ENCODE measurements at regions of chr12 and their contacts with region 1.

Region 1: DNA sequence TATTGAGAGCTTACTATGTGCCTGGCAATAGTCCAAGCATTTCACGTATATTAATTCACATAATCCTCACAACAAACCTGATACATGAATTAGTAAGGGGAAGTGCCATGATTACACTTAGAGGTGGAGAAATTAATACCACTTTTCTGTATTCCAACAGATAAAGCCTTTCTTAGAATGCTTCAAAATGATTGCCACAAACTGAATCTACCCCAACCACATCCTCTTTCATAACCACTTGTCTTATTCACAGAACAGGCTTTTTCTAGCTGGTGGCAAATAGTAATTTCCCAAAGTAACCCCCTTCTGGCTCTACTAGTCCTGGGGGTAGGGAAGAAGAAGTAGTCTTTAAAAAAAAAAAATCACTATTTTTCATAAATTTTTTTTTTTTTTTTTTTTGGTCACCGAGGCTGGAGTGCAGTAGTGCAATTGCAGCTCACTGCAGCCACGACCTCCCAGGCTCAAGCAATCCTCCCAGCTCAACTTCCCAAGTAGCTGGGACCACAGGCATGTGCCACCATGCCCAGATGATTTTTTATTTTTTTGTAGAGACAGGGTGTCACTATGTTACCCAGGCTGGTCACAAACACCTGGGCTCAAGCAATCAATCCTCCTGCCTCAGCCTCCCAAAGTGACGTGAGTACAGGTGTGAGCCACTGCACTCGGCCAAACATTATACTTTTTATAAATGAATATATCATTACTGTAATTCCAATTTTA is 59.0 kb upstream of the ARID2 start:
- DNase-seq: peak; percentile 9
- H3K4me3 Mint-ChIP-seq: no peak overlapping the region
- H3K27ac Mint-ChIP-seq: no peak overlapping the region
- H3K4me1 Mint-ChIP-seq: peaks cover 31% of the 10 kb centered on the region
- H3K27me3 Mint-ChIP-seq: no peaks in the 10 kb centered on the region

Region 2: DNA sequence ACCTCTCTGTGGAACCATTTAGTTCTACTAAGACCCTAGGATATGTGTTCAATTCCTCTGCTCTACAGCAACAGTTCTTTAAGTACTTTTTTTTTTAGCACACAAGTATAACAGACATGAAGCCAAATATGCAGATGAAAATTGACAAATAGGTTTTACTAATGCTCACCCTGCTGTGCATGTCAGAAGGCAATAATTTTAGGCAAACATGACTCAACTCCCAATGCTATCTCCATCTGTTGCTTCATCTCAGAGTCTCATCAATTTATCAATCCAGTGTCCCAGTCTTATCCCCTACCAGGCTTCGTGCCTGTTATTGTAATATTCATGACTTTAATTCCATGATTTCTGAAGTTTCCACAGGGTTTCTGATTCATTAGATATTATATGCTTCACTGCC is 677.3 kb before region 1 on chr12:
- intact Hi-C with region 1: no loop called
- DNase-seq: no peak
- H3K4me3 Mint-ChIP-seq: no peak overlapping the region
- H3K27ac Mint-ChIP-seq: no peak overlapping the region
- H3K4me1 Mint-ChIP-seq: no peaks in the 10 kb centered on the region
- H3K27me3 Mint-ChIP-seq: peaks cover 2% of the 10 kb centered on the region

Region 3: GRCh38 chr12:45464699-45465098 is 205.8 kb before region 1 on chr12:
- intact Hi-C with region 1: no loop called
- DNase-seq: no peak
- H3K4me3 Mint-ChIP-seq: no peak overlapping the region
- H3K27ac Mint-ChIP-seq: no peak overlapping the region
- H3K4me1 Mint-ChIP-seq: peaks cover 2% of the 10 kb centered on the region
- H3K27me3 Mint-ChIP-seq: peaks cover 15% of the 10 kb centered on the region

Region 4: DNA sequence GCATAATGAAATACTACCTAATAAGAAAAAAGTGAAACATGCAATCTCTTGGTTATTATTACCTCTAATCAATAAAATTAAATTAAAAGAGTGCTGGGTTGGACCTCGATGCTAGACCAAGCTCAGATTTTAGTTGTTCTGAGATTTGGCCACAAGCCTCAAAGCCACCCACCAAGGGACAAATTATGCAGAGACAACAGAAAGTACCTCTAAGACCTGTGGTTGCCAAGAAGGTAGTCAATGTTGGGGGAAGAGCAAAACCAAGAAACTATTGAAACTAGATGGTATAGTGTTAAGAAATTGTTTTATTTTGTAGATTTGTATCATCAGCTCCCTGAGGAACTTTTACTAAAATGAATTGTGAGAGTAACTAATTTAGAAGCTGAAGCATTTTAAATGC is 15.2 kb after region 1 on chr12:
- intact Hi-C with region 1: loop called (anchors 2 kb)
- DNase-seq: no peak
- H3K4me3 Mint-ChIP-seq: no peak overlapping the region
- H3K27ac Mint-ChIP-seq: no peak overlapping the region
- H3K4me1 Mint-ChIP-seq: peaks cover 25% of the 10 kb centered on the region
- H3K27me3 Mint-ChIP-seq: peaks cover 3% of the 10 kb centered on the region

Region 5: GRCh38 chr12:45696049-45696448 is 25.5 kb after region 1 on chr12:
- intact Hi-C with region 1: no loop called
- DNase-seq: no peak
- H3K4me3 Mint-ChIP-seq: no peak overlapping the region
- H3K27ac Mint-ChIP-seq: no peak overlapping the region
- H3K4me1 Mint-ChIP-seq: no peaks in the 10 kb centered on the region
- H3K27me3 Mint-ChIP-seq: peaks cover 3% of the 10 kb centered on the region

Measured in activated T-helper 1 cell treated with anti-CD3 and anti-CD28 coated beads, Interleukin-12 subunit alpha, Interleukin-12 subunit beta, Interleukin-2, Interleukin-4 antibody, amounts not matched to agents 30 ng/mL and 10 ng/mL and 1 ng/mL, durations not matched to agents 14 hours and 24 hours and 36 hours (primary cell).